SK-N-SH (cell line): ENCODE measurements at regions of chr5 and their contacts with region 1.

Region 1: GRCh38 chr5:170216266-170216864 is 16.4 kb upstream of the C5orf58 start:
- DNase-seq: peak; percentile 57
- H3K4me3 ChIP-seq: no peak overlapping the region; a peak in 1 of 4 replicates
- H3K27ac ChIP-seq: no peak overlapping the region
- H3K4me1 ChIP-seq: peaks cover 0 to 15% of the 10 kb centered on the region in 2 experiments; a peak in 1 of 4 replicates
- H3K27me3 ChIP-seq: no peaks in the 10 kb centered on the region
- CTCF ChIP-seq: peak; percentile 75
- EP300 ChIP-seq: no peak
- RAD21 ChIP-seq: peak; percentile 98

Region 2: GRCh38 chr5:169701910-169702451 is 514.4 kb before region 1 on chr5:
- CTCF ChIA-PET with region 1: interaction called, 20 read pairs
- POLR2A ChIA-PET with region 1: no interaction called
- DNase-seq: peak; percentile 37
- H3K4me3 ChIP-seq: no peak overlapping the region; a peak in 1 of 4 replicates
- H3K27ac ChIP-seq: peak overlapping the region in 1 of 2 experiments; percentile 6; a peak in 1 of 4 replicates
- H3K4me1 ChIP-seq: peaks cover 3 to 31% of the 10 kb centered on the region in 2 experiments; a peak in 3 of 4 replicates
- H3K27me3 ChIP-seq: no peaks in the 10 kb centered on the region
- CTCF ChIP-seq: peak; percentile 74
- EP300 ChIP-seq: no peak
- RAD21 ChIP-seq: peak; percentile 87

Region 3: GRCh38 chr5:170111088-170111785 is 105.1 kb before region 1 on chr5:
- CTCF ChIA-PET with region 1: interaction called, 18 read pairs
- POLR2A ChIA-PET with region 1: no interaction called
- DNase-seq: no peak
- H3K4me3 ChIP-seq: no peak overlapping the region
- H3K27ac ChIP-seq: no peak overlapping the region
- H3K4me1 ChIP-seq: no peaks in the 10 kb centered on the region; a peak in 1 of 4 replicates
- H3K27me3 ChIP-seq: no peaks in the 10 kb centered on the region; the same call in 1 of the 2 replicates
- CTCF ChIP-seq: no peak
- EP300 ChIP-seq: no peak
- RAD21 ChIP-seq: no peak

Region 4: DNA sequence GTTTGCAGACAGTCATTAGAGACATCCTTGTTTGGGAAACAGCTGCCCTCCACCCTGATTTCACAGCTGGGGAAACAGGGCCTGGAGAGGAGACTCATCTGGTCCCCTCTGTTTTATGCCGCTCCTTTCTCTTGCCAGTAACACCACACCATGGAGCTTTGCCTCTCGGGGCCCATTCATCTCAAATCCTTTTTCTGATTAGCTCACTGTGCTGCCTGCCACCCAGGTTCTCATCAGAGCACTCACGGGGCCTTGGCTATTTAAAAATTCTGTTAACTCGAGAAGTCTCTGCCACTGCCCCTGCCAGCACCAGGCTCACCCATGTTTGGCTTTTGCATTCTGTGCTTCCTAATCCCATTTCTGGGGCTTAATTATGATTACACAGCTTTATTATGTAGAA is 20.4 kb before region 1 on chr5:
- CTCF ChIA-PET with region 1: interaction called, 14 read pairs
- POLR2A ChIA-PET with region 1: no interaction called
- DNase-seq: no peak
- H3K4me3 ChIP-seq: no peak overlapping the region
- H3K27ac ChIP-seq: no peak overlapping the region
- H3K4me1 ChIP-seq: peaks cover 0 to 11% of the 10 kb centered on the region in 2 experiments; a peak in 1 of 4 replicates
- H3K27me3 ChIP-seq: peaks cover 4% of the 10 kb centered on the region; the same call in 1 of the 2 replicates
- CTCF ChIP-seq: no peak
- EP300 ChIP-seq: no peak
- RAD21 ChIP-seq: no peak

Region 5: GRCh38 chr5:170206216-170206615 is 10.1 kb before region 1 on chr5:
- CTCF ChIA-PET with region 1: interaction called, 14 read pairs
- POLR2A ChIA-PET with region 1: no interaction called
- DNase-seq: no peak
- H3K4me3 ChIP-seq: no peak overlapping the region
- H3K27ac ChIP-seq: no peak overlapping the region
- H3K4me1 ChIP-seq: no peaks in the 10 kb centered on the region
- H3K27me3 ChIP-seq: no peaks in the 10 kb centered on the region; the same call in 1 of the 2 replicates
- CTCF ChIP-seq: no peak
- EP300 ChIP-seq: no peak
- RAD21 ChIP-seq: no peak